Naive thymus-derived CD4-positive, alpha-beta T cell (primary cell): ENCODE measurements at regions of chr20 and their contacts with region 1.

Region 1: DNA sequence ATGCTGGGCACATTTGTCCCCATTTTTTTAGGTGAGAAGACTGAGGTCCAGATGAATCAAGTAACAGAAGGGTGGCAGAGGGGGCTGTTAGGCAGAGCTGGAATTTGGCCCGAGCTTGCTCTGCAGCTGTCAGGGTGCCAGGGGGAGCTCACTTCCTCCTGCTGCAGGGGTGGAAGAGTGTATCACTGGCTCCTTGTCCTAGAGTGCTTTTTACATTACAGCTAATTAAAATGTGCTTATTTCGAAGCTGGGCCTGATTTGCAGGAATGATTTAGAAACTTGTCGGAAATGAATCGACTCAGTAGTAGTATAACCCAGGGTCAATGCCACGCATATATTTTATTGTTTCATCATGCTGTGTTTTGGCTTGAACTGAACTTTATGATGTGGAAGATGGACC is 11.1 kb downstream of the TOX2 start:
- DNase-seq: peak in 6 of 9 donors; percentile 32 to 52 (median 40)
- ATAC-seq: peak; percentile 69
- H3K4me3 ChIP-seq: no peak overlapping the region
- H3K4me3 Mint-ChIP-seq: peak overlapping the region; percentile 38 to 82 (median 73)
- H3K27ac ChIP-seq: no peak overlapping the region
- H3K27ac Mint-ChIP-seq: peak overlapping the region in 7 of 9 donors; percentile 48 to 87 (median 71)
- H3K4me1 ChIP-seq: peaks cover 20 to 39% of the 10 kb centered on the region in 2 donors
- H3K4me1 Mint-ChIP-seq: peaks cover 35 to 84% (median 68%) of the 10 kb centered on the region in 7 donors
- H3K27me3 ChIP-seq: no peaks in the 10 kb centered on the region
- H3K27me3 Mint-ChIP-seq: peaks cover 0 to 62% (median 9%) of the 10 kb centered on the region in 5 donors

Region 2: GRCh38 chr20:43456809-43457639 is 468.8 kb before region 1 on chr20:
- CTCF ChIA-PET with region 1: no interaction called
- POLR2A ChIA-PET with region 1: no interaction called
- intact Hi-C with region 1: loop called in 1 of 2 experiments (anchors 10 kb)
- DNase-seq: peak in 7 of 9 donors; percentile 73 to 92 (median 91)
- ATAC-seq: peak; percentile 82
- H3K4me3 ChIP-seq: peak overlapping the region; percentile 86
- H3K4me3 Mint-ChIP-seq: peak overlapping the region; percentile 79 to 100 (median 94)
- H3K27ac ChIP-seq: peak overlapping the region; percentile 100
- H3K27ac Mint-ChIP-seq: peak overlapping the region; percentile 96 to 100 (median 99)
- H3K4me1 ChIP-seq: peaks cover 10 to 29% of the 10 kb centered on the region in 2 donors
- H3K4me1 Mint-ChIP-seq: peaks cover 24 to 42% (median 35%) of the 10 kb centered on the region in 7 donors
- H3K27me3 ChIP-seq: no peaks in the 10 kb centered on the region
- H3K27me3 Mint-ChIP-seq: peaks cover 0 to 14% (median 4%) of the 10 kb centered on the region in 5 donors

Region 3: GRCh38 chr20:43942661-43943290 is 17.0 kb after region 1 on chr20:
- CTCF ChIA-PET with region 1: interaction called, 5 read pairs
- POLR2A ChIA-PET with region 1: interaction called, 9 read pairs
- intact Hi-C with region 1: loop called (anchors 1 to 2 kb)
- DNase-seq: peak in 7 of 9 donors; percentile 28 to 56 (median 47)
- ATAC-seq: peak; percentile 72
- H3K4me3 ChIP-seq: no peak overlapping the region
- H3K4me3 Mint-ChIP-seq: peak overlapping the region; percentile 16 to 79 (median 46)
- H3K27ac ChIP-seq: peak overlapping the region; percentile 9
- H3K27ac Mint-ChIP-seq: peak overlapping the region; percentile 42 to 90 (median 72)
- H3K4me1 ChIP-seq: peaks cover 29% of the 10 kb centered on the region in 2 donors
- H3K4me1 Mint-ChIP-seq: peaks cover 61 to 92% (median 68%) of the 10 kb centered on the region in 7 donors
- H3K27me3 ChIP-seq: no peaks in the 10 kb centered on the region
- H3K27me3 Mint-ChIP-seq: peaks cover 0 to 27% (median 0%) of the 10 kb centered on the region in 5 donors

Region 4: DNA sequence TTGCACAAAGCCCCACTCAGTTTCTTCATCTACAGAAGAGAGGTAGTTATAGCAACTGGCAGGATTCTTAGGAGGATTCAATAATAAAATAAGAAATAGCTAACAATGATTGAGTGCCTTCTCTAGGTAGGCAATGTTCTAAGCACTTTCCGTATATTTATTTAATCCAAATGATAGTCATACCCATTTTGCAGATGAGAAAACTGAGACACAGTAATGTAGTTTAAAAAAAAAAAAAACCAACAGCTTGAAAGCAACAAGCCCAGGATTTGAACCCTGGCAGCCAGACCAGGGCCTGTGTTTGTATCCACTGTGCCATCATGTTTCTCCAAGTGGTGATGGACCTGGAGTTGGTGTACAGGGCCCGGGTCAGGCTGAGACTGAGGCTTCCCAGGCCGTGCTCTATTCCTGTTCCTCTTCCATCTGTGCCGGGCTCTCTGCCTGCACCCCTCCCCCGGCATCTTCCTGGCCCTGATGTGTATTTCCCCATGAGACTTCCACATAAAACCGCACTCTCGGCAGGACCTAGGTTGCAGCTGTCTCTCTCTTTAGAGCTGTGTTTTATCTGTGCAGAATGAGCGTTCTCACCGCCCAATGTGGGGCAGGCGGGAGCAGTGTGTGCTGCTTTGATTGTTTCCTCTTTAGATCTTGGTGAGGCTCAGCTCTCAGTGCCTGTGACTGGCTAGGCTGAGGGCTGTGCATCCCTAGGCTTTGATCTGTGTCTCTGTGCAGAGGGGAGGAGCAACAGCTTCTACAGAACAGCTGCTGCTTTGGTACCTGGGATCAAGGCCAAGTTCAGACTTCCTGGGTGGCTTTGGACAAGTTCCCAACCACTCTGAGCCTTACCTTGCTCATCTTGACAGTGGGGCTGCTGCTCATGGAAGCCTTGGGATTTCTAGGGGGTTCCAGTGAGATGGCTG is 38.3 kb after region 1 on chr20:
- CTCF ChIA-PET with region 1: interaction called, 6 read pairs
- POLR2A ChIA-PET with region 1: no interaction called
- intact Hi-C with region 1: loop called in 1 of 2 experiments (anchors 1 kb)
- DNase-seq: peak in 7 of 9 donors; percentile 71 to 86 (median 83)
- ATAC-seq: peak; percentile 94
- H3K4me3 ChIP-seq: no peak overlapping the region
- H3K4me3 Mint-ChIP-seq: peak overlapping the region; percentile 47 to 80 (median 72)
- H3K27ac ChIP-seq: peak overlapping the region; percentile 18
- H3K27ac Mint-ChIP-seq: peak overlapping the region in 4 of 9 donors; percentile 16 to 90 (median 59)
- H3K4me1 ChIP-seq: peaks cover 43 to 65% of the 10 kb centered on the region in 2 donors
- H3K4me1 Mint-ChIP-seq: peaks cover 25 to 52% (median 43%) of the 10 kb centered on the region in 7 donors
- H3K27me3 ChIP-seq: no peaks in the 10 kb centered on the region
- H3K27me3 Mint-ChIP-seq: peaks cover 0 to 18% (median 0%) of the 10 kb centered on the region in 5 donors

Region 5: DNA sequence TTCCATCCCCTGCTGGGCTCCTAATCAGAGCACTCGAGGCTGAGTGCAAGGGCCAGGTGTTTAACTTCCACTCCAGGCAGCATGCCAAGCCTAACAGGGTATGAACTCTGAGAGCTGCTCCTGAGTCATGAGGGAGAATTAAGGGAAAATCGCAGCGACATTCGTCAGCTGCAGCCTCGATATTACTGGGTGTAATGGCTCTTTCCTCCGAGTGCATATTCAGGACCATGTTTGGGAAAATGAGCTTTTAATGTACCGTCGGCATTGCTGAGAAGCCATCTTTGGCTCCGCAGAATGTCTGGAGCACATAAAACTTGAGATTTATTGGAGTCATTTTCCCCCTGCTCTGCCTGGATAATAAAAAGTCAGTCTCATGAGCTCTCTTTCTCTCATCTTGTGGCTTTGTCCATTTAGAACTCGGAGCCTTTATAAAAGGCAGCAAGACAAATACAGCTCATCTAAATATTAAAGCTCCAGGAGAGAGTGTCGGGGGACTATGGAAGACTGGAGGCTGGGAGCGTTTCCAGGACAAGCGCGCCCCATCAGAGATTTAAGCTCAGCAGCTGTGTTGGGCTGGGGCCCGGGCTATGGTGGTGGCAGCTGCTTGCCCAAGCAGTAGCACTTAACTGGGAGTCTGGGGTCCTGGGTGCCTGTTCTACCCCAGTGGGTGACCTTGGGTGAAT is 92.6 kb after region 1 on chr20:
- CTCF ChIA-PET with region 1: no interaction called
- POLR2A ChIA-PET with region 1: no interaction called
- intact Hi-C with region 1: loop called in 1 of 2 experiments (anchors 2 kb)
- DNase-seq: no peak
- ATAC-seq: no peak
- H3K4me3 ChIP-seq: no peak overlapping the region
- H3K4me3 Mint-ChIP-seq: peak overlapping the region in 3 of 10 donors; percentile 5 to 83 (median 70)
- H3K27ac ChIP-seq: no peak overlapping the region
- H3K27ac Mint-ChIP-seq: peak overlapping the region in 1 of 9 donors; percentile 17
- H3K4me1 ChIP-seq: peaks cover 26 to 33% of the 10 kb centered on the region in 2 donors
- H3K4me1 Mint-ChIP-seq: peaks cover 21 to 56% (median 43%) of the 10 kb centered on the region in 7 donors
- H3K27me3 ChIP-seq: no peaks in the 10 kb centered on the region
- H3K27me3 Mint-ChIP-seq: peaks cover 0 to 69% (median 5%) of the 10 kb centered on the region in 5 donors

Region 6: GRCh38 chr20:44056010-44056698 is 130.4 kb after region 1 on chr20:
- CTCF ChIA-PET with region 1: interaction called, 4 read pairs
- POLR2A ChIA-PET with region 1: no interaction called
- intact Hi-C with region 1: loop called in 1 of 2 experiments (anchors 1 kb)
- DNase-seq: peak in 8 of 9 donors; percentile 41 to 83 (median 74)
- ATAC-seq: peak; percentile 96
- H3K4me3 ChIP-seq: no peak overlapping the region
- H3K4me3 Mint-ChIP-seq: no peak overlapping the region
- H3K27ac ChIP-seq: no peak overlapping the region
- H3K27ac Mint-ChIP-seq: peak overlapping the region in 7 of 9 donors; percentile 6 to 85 (median 33)
- H3K4me1 ChIP-seq: peaks cover 0 to 9% of the 10 kb centered on the region in 2 donors
- H3K4me1 Mint-ChIP-seq: peaks cover 10 to 49% (median 30%) of the 10 kb centered on the region in 7 donors
- H3K27me3 ChIP-seq: no peaks in the 10 kb centered on the region
- H3K27me3 Mint-ChIP-seq: peaks cover 0 to 19% (median 0%) of the 10 kb centered on the region in 5 donors

Region 7: DNA sequence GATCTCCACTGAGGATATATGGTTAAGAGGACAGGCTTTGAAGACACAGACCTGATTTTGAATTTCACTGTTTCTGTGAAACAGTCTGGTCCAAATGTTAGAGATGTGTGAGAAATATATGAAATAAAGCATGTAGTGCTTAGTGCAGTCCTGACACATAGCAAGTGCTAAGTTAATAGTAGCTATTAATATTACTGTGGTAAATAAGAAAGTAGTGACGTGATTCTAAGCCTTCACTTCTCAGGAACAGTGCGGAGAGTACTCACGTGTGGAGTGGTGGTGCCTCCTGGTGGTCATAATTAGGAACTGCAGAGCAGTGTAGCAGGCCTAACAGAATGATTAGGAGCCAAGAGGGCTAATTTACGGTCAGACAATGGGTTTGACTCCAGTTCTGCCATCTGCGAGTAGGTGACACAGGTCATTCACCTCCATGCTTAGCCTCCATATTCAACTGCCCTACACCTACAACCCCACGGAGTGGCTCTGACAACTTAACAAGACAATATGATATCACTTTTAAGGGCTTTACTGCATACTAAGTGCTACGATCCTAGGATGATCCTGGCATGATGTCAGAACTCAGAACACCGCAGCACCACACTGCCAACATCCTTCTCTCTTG is 155.0 kb after region 1 on chr20:
- CTCF ChIA-PET with region 1: no interaction called
- POLR2A ChIA-PET with region 1: no interaction called
- intact Hi-C with region 1: loop called in 1 of 2 experiments (anchors 1 kb)
- DNase-seq: peak; percentile 55 to 85 (median 79)
- ATAC-seq: peak; percentile 100
- H3K4me3 ChIP-seq: no peak overlapping the region
- H3K4me3 Mint-ChIP-seq: peak overlapping the region in 8 of 10 donors; percentile 0 to 48 (median 29)
- H3K27ac ChIP-seq: no peak overlapping the region
- H3K27ac Mint-ChIP-seq: peak overlapping the region in 8 of 9 donors; percentile 66 to 96 (median 86)
- H3K4me1 ChIP-seq: peaks cover 0 to 18% of the 10 kb centered on the region in 2 donors
- H3K4me1 Mint-ChIP-seq: peaks cover 13 to 38% (median 25%) of the 10 kb centered on the region in 7 donors
- H3K27me3 ChIP-seq: no peaks in the 10 kb centered on the region
- H3K27me3 Mint-ChIP-seq: peaks cover 0 to 4% (median 0%) of the 10 kb centered on the region in 5 donors